CD4-positive, alpha-beta memory T cell (primary cell): ENCODE measurements at regions of chr9 and their contacts with region 1.

Region 1: GRCh38 chr9:21110708-21111576 is 30.7 kb downstream of the IFNW1 start:
- DNase-seq: peak; percentile 43 to 67 (median 64)
- H3K4me3 ChIP-seq: no peak overlapping the region
- H3K4me3 Mint-ChIP-seq: no peak overlapping the region
- H3K27ac ChIP-seq: no peak overlapping the region
- H3K27ac Mint-ChIP-seq: no peak overlapping the region
- H3K4me1 ChIP-seq: no peaks in the 10 kb centered on the region
- H3K4me1 Mint-ChIP-seq: no peaks in the 10 kb centered on the region
- H3K27me3 ChIP-seq: no peaks in the 10 kb centered on the region
- H3K27me3 Mint-ChIP-seq: peaks cover 2 to 3% of the 10 kb centered on the region in 2 donors

Region 2: GRCh38 chr9:19925817-19926503 is 1185.0 kb before region 1 on chr9:
- CTCF ChIA-PET with region 1: interaction called, 57 read pairs
- POLR2A ChIA-PET with region 1: no interaction called
- intact Hi-C with region 1: loop called (anchors 1 kb)
- DNase-seq: peak; percentile 77 to 82 (median 79)
- H3K4me3 ChIP-seq: peak overlapping the region in 1 of 2 donors; percentile 27
- H3K4me3 Mint-ChIP-seq: peak overlapping the region; percentile 60 to 81 (median 76)
- H3K27ac ChIP-seq: no peak overlapping the region
- H3K27ac Mint-ChIP-seq: peak overlapping the region in 1 of 7 donors; percentile 21
- H3K4me1 ChIP-seq: peaks cover 8% of the 10 kb centered on the region
- H3K4me1 Mint-ChIP-seq: peaks cover 0 to 7% (median 5%) of the 10 kb centered on the region in 4 donors
- H3K27me3 ChIP-seq: no peaks in the 10 kb centered on the region
- H3K27me3 Mint-ChIP-seq: peaks cover 0 to 10% of the 10 kb centered on the region in 2 donors

Region 3: GRCh38 chr9:20558566-20559016 is 552.4 kb before region 1 on chr9:
- CTCF ChIA-PET with region 1: interaction called, 4 read pairs
- POLR2A ChIA-PET with region 1: no interaction called
- intact Hi-C with region 1: loop called (anchors 10 kb)
- DNase-seq: no peak
- H3K4me3 ChIP-seq: no peak overlapping the region
- H3K4me3 Mint-ChIP-seq: peak overlapping the region in 2 of 8 donors; percentile 44 to 74
- H3K27ac ChIP-seq: no peak overlapping the region
- H3K27ac Mint-ChIP-seq: peak overlapping the region in 1 of 7 donors; percentile 20
- H3K4me1 ChIP-seq: peaks cover 74% of the 10 kb centered on the region
- H3K4me1 Mint-ChIP-seq: peaks cover 57 to 89% (median 80%) of the 10 kb centered on the region in 4 donors
- H3K27me3 ChIP-seq: no peaks in the 10 kb centered on the region
- H3K27me3 Mint-ChIP-seq: no peaks in the 10 kb centered on the region

Region 4: DNA sequence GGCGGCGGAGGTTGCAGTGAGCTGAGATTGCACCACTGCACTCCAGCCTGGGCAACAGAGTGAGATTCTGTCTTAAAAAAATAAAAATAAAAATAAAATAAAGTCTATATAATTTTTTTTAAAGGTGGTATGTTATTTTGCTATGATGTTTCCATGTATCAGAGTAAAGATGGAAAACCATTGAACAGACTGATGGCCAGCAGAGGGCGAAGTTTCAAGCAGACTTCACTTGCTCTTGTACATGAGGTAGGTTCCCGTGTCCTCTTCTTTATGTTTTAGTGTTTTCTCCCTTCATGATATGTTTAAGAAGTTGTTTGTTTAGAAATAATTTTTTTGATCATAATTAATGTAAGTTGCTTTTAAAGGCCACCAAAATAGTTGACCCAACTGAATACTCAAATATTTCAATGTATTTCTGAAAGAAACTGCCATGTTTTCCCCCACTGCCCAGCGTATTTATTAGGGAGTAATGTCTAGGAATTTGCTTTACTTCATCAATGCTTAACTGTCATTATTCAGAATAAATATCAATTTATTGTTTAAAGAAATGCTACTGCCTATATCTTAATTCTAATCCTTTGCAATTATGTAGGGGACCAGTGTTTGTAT is 225.9 kb before region 1 on chr9:
- CTCF ChIA-PET with region 1: interaction called, 145 read pairs
- POLR2A ChIA-PET with region 1: no interaction called
- intact Hi-C with region 1: loop called (anchors 1 kb)
- DNase-seq: peak; percentile 43 to 57 (median 50)
- H3K4me3 ChIP-seq: no peak overlapping the region
- H3K4me3 Mint-ChIP-seq: no peak overlapping the region
- H3K27ac ChIP-seq: no peak overlapping the region
- H3K27ac Mint-ChIP-seq: no peak overlapping the region
- H3K4me1 ChIP-seq: no peaks in the 10 kb centered on the region
- H3K4me1 Mint-ChIP-seq: no peaks in the 10 kb centered on the region
- H3K27me3 ChIP-seq: no peaks in the 10 kb centered on the region
- H3K27me3 Mint-ChIP-seq: no peaks in the 10 kb centered on the region

Region 5: GRCh38 chr9:21078717-21079116 is 32.2 kb before region 1 on chr9:
- CTCF ChIA-PET with region 1: interaction called, 53 read pairs
- POLR2A ChIA-PET with region 1: interaction called, 6 read pairs
- intact Hi-C with region 1: loop called (anchors 1 kb)
- DNase-seq: peak in 2 of 5 donors; percentile 11 to 14
- H3K4me3 ChIP-seq: no peak overlapping the region
- H3K4me3 Mint-ChIP-seq: peak overlapping the region in 1 of 8 donors; percentile 37
- H3K27ac ChIP-seq: no peak overlapping the region
- H3K27ac Mint-ChIP-seq: peak overlapping the region in 2 of 7 donors; percentile 34 to 69
- H3K4me1 ChIP-seq: peaks cover 19% of the 10 kb centered on the region
- H3K4me1 Mint-ChIP-seq: peaks cover 13 to 40% (median 25%) of the 10 kb centered on the region in 4 donors
- H3K27me3 ChIP-seq: no peaks in the 10 kb centered on the region
- H3K27me3 Mint-ChIP-seq: peaks cover 0 to 3% of the 10 kb centered on the region in 2 donors

Region 6: DNA sequence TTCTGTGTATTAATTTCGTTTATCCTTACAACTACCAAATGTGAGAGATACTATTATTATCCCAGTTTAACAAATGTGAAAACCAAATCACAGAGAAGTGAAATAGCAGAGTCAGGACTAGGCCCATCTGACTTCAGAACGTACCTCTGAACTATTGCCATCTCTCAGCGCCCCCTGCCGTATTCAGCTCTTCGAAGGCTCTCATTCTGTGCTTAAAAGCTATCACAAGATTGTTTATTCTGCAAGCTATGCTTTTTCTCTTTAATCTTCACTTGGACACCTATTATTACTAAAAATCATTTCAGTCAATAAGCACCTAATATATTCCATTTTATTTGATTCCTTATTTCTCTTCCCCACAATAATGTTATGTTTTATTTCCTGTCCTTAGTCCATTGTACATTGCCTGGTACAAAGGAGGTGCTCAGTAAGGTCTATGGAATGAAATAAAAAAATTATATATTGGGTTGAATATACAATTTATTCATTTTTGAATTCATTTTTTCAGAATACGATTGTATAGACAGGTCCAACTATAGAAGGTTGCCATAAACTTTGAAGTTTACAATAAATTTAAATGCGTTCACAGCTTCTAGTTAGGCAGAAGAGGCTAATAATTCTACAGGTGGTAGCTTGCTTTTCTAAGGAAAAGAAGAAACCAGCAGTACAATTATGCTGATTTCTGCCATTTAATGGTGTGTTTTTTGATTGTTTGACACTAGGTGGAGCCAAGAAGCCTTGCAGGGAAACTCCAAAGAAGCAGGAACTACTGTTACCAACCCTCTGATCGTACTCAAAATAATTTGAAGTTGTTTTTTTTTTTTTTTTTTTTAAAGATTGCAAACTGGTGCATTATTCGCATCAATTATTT is 1133.4 kb after region 1 on chr9:
- CTCF ChIA-PET with region 1: no interaction called
- POLR2A ChIA-PET with region 1: no interaction called
- intact Hi-C with region 1: no loop called
- DNase-seq: peak in 4 of 5 donors; percentile 16 to 30 (median 26)
- H3K4me3 ChIP-seq: no peak overlapping the region
- H3K4me3 Mint-ChIP-seq: peak overlapping the region in 3 of 8 donors; percentile 17 to 35 (median 25)
- H3K27ac ChIP-seq: no peak overlapping the region
- H3K27ac Mint-ChIP-seq: no peak overlapping the region
- H3K4me1 ChIP-seq: no peaks in the 10 kb centered on the region
- H3K4me1 Mint-ChIP-seq: peaks cover 2 to 10% (median 6%) of the 10 kb centered on the region in 4 donors
- H3K27me3 ChIP-seq: no peaks in the 10 kb centered on the region
- H3K27me3 Mint-ChIP-seq: peaks cover 1 to 3% of the 10 kb centered on the region in 2 donors